Heart right ventricle (tissue), 16 donors: ENCODE measurements at regions of chr5 and their contacts with region 1.

Region 1: GRCh38 chr5:52743970-52744369 is 43.7 kb upstream of the ITGA1 start:
- DNase-seq: peak in 1 of 2 donors; percentile 4
- ATAC-seq: peak in 6 of 8 donors; percentile 47 to 84 (median 65)
- H3K4me3 ChIP-seq: no peak overlapping the region
- H3K27ac ChIP-seq: peak overlapping the region in 9 of 10 donors; percentile 1 to 59 (median 47)
- H3K4me1 ChIP-seq: peaks cover 0 to 37% (median 31%) of the 10 kb centered on the region in 9 donors
- H3K27me3 ChIP-seq: no peaks in the 10 kb centered on the region
- CTCF ChIP-seq: no peak

Region 2: DNA sequence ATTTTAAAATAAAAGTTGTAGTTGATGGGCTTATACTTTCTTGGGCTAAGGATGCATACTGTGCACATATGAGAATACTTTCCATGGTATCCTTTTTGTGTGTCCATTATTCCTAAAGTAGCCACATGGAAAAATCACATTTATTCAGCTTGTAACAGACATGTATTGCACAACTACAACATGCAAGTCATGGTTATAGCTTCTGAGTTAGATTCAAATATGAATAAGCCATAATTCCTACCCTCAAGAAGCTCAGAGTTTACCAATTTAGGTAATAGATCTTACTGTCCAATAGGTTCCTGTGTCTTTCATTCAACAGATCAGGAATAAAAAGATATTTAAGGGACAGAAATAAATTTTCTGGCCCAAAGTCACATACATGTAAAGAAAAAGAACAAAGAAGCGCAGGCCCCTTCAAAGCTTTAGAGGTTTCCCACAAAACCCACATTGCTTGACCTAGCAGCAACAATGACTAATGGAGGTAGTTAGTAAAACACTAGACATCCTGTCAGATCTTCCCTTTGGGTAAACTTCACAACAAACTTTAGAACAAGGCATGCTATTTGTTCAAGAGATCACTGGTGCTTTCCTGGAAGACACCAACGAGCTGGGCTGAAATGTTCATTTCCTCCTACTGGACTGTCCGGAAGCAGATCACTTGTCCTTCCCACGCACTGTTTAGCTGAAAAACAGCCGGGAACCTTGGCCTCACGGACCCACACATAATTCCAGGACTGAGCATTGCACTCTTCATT is 34.6 kb before region 1 on chr5:
- intact Hi-C with region 1: loop called in 1 of 10 experiments (anchors 1 kb)
- DNase-seq: peak in 1 of 2 donors; percentile 33
- ATAC-seq: peak; percentile 53 to 82 (median 70)
- H3K4me3 ChIP-seq: no peak overlapping the region
- H3K27ac ChIP-seq: peak overlapping the region in 9 of 10 donors; percentile 28 to 80 (median 52)
- H3K4me1 ChIP-seq: peaks cover 0 to 61% (median 25%) of the 10 kb centered on the region in 9 donors
- H3K27me3 ChIP-seq: no peaks in the 10 kb centered on the region
- CTCF ChIP-seq: no peak

Region 3: GRCh38 chr5:52870448-52870847 is 126.5 kb after region 1 on chr5:
- intact Hi-C with region 1: no loop called
- DNase-seq: peak; percentile 21 to 30
- ATAC-seq: peak; percentile 53 to 91 (median 63)
- H3K4me3 ChIP-seq: no peak overlapping the region
- H3K27ac ChIP-seq: peak overlapping the region in 3 of 10 donors; percentile 4 to 27 (median 16)
- H3K4me1 ChIP-seq: peaks cover 0 to 32% (median 20%) of the 10 kb centered on the region in 9 donors
- H3K27me3 ChIP-seq: no peaks in the 10 kb centered on the region
- CTCF ChIP-seq: no peak